GM12878 (cell line): ENCODE measurements at regions of chr5 and their contacts with region 1.

Region 1: DNA sequence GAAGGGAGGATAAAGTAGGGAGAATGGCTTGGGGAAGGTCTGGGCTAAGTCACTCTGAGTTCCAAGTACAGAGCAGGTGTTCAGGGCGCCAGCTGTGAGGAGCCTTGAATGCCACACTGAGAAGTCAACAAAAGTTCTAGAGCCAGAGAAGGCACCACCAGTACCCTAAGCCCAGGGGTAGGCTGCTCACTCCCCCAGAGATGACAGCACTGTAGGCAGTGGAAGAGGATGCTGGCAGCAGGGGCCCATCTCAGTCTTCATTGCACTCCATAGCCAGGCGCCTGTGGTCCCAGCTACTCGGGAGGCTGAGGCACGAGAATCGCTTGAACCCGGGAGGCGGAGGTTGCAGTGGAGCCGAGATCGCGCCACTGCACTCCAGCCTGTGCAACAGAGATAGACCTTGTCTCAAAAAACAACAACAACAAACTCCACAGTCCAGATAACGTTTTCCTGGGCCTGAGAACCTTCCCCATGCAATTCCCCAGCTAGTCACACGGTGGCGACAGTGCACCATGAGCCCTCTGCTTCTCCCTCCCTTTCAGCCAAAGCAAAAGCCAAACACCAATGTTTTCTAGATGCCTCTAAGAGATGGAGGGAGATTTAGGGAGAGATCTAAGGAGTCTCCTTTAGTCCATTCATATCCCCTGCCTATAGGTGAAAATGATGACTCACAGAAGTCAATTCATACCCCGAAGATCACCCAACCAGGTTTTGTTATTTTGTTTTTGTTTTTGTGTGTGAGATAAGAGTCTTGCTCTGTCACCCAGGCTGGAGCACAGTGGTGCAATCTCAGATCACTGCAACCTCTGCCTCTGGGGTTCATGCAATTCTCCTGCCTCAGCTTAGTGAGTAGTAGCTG is 19.8 kb upstream of the NSD1 start:
- DNase-seq: peak; percentile 55
- ATAC-seq: peak; percentile 81
- H3K4me3 ChIP-seq: no peak overlapping the region
- H3K27ac ChIP-seq: no peak overlapping the region
- H3K4me1 ChIP-seq: peaks cover 3% of the 10 kb centered on the region; the same call in 1 of the 2 replicates
- H3K27me3 ChIP-seq: no peaks in the 10 kb centered on the region
- CTCF ChIP-seq: peak; percentile 99 to 100 (median 99); a peak in 5 of 6 replicates
- EP300 ChIP-seq: no peak
- POLR2A ChIP-seq: no peak
- RAD21 ChIP-seq: peak; percentile 100

Region 2: DNA sequence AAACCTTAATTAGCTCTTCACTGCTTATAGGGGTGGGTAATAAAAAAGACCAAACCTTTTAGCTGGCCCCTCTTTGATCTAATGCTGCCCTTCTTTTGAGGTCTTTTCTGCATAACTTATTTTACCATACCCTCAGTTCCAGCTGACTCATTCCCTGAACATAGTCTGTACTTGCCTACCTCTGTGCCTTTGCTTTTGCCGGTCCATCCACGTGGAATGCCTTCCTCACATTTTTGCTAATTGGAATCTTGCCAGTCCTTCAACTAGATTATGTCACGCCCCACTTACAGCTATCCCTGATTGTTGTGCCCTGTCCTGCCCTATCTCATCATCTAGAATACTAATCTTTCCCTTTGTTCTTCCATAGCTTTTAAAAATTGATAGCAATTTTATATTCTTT is 621.4 kb before region 1 on chr5:
- CTCF ChIA-PET with region 1: no interaction called
- POLR2A ChIA-PET with region 1: no interaction called
- RAD21 ChIA-PET with region 1: no interaction called
- SMC1A ChIA-PET with region 1: no interaction called
- in situ Hi-C with region 1: no loop called
- intact Hi-C with region 1: no loop called
- DNase-seq: no peak
- ATAC-seq: no peak
- H3K4me3 ChIP-seq: no peak overlapping the region
- H3K27ac ChIP-seq: no peak overlapping the region
- H3K4me1 ChIP-seq: no peaks in the 10 kb centered on the region
- H3K27me3 ChIP-seq: no peaks in the 10 kb centered on the region
- CTCF ChIP-seq: no peak
- EP300 ChIP-seq: no peak
- POLR2A ChIP-seq: no peak
- RAD21 ChIP-seq: no peak

Region 3: DNA sequence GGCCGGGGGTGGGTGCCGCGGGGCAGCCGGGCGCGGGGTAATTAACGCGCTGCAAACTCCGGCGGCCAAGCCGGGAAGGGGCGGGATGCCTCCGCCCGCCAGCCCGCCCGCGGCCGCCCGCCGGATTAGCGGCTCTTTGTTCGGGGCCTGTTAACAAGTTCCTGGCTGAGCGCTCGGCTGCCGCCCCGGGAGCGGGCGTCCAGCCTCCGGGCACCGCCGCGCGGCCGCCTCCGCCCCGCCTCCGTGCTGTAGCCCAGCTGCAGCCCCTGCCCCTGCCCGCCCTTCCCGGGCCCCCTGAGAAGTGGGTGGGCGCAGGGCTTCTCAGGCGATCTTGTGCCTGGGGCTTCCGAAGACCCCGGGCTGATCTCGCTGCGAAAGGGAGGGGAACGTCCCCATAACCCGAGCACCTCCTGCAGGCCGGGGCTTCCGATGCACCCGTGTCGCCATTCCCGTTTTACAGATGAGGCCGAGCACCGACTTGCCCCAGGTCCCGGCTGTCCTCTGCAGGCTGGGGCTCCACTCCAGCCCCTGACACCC is 295.9 kb before region 1 on chr5:
- CTCF ChIA-PET with region 1: no interaction called
- POLR2A ChIA-PET with region 1: no interaction called
- RAD21 ChIA-PET with region 1: no interaction called
- SMC1A ChIA-PET with region 1: no interaction called
- in situ Hi-C with region 1: no loop called
- intact Hi-C with region 1: loop called (anchors 5 kb)
- DNase-seq: no peak
- ATAC-seq: peak; percentile 36
- H3K4me3 ChIP-seq: no peak overlapping the region
- H3K27ac ChIP-seq: no peak overlapping the region
- H3K4me1 ChIP-seq: no peaks in the 10 kb centered on the region
- H3K27me3 ChIP-seq: peaks cover 0 to 12% of the 10 kb centered on the region in 2 experiments; a peak in 3 of 4 replicates
- CTCF ChIP-seq: peak; percentile 16 to 29 (median 18); a peak in 2 of 6 replicates
- EP300 ChIP-seq: no peak
- POLR2A ChIP-seq: no peak
- RAD21 ChIP-seq: 0 out of 2 replicates have a peak, but pooled peaks have one; percentile 2

Region 4: DNA sequence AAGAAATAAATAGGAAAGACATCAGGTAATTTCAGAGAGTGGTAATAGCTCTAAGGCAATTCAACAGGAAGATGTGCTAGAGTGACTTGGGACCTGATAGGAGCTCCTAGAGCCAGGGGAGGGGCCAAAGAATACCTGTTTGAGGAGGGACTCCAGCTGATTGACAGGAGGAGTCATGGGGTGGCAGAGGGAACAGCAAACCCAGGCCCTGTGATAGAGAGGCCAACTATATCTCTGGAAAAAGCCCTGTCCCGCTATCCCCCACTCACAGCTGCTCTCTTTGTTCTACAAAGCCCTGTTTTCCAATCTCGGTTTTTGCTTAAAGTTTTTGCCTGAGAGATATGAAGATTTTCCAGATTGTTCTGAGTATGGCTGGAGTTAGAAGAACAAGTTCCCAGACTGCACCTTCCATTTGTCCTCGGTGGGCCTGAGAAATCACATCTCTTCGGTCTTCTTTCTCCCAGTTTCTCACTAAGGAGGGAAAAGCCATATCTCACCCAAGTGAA is 10.7 kb after region 1 on chr5:
- CTCF ChIA-PET with region 1: interaction called, 16 read pairs
- POLR2A ChIA-PET with region 1: no interaction called
- RAD21 ChIA-PET with region 1: interaction called, 4 read pairs
- SMC1A ChIA-PET with region 1: interaction called, 7 read pairs
- in situ Hi-C with region 1: no loop called
- intact Hi-C with region 1: no loop called
- DNase-seq: no peak
- ATAC-seq: peak; percentile 54
- H3K4me3 ChIP-seq: no peak overlapping the region
- H3K27ac ChIP-seq: no peak overlapping the region; the same call in 1 of the 2 replicates
- H3K4me1 ChIP-seq: peaks cover 15% of the 10 kb centered on the region
- H3K27me3 ChIP-seq: no peaks in the 10 kb centered on the region
- CTCF ChIP-seq: no peak
- EP300 ChIP-seq: no peak
- POLR2A ChIP-seq: no peak
- RAD21 ChIP-seq: no peak

Region 5: GRCh38 chr5:177249761-177250526 is 136.1 kb after region 1 on chr5:
- CTCF ChIA-PET with region 1: interaction called, 15 read pairs
- POLR2A ChIA-PET with region 1: no interaction called
- RAD21 ChIA-PET with region 1: interaction called, 9 read pairs
- SMC1A ChIA-PET with region 1: interaction called, 9 read pairs
- in situ Hi-C with region 1: no loop called
- intact Hi-C with region 1: no loop called
- DNase-seq: no peak
- ATAC-seq: no peak
- H3K4me3 ChIP-seq: no peak overlapping the region
- H3K27ac ChIP-seq: no peak overlapping the region
- H3K4me1 ChIP-seq: no peaks in the 10 kb centered on the region
- H3K27me3 ChIP-seq: no peaks in the 10 kb centered on the region
- CTCF ChIP-seq: no peak
- EP300 ChIP-seq: no peak
- POLR2A ChIP-seq: no peak
- RAD21 ChIP-seq: no peak

Region 6: DNA sequence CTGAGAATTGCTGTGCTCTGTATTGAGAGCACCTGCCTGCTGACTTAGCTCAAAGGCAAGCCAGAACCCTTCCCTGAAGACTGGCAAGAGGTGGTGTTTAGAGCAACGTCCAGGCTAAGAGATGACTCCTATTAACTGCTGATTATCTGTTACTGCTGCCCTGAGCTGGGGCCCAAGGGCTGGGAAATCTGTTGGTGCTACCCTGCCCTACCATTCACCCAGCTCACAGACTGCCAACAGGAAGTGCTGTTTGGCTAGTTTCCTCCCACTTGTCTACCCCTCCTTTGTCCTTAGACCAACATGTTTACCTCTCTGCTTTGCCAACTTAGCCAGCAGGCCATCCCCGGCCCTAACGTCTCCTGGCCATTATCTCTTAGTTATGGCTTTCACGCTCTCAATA is 182.8 kb after region 1 on chr5:
- CTCF ChIA-PET with region 1: interaction called, 35 read pairs
- POLR2A ChIA-PET with region 1: interaction called, 4 read pairs
- RAD21 ChIA-PET with region 1: interaction called, 12 read pairs
- SMC1A ChIA-PET with region 1: interaction called, 7 read pairs
- in situ Hi-C with region 1: loop called (anchors 5 kb)
- intact Hi-C with region 1: loop called (anchors 5 kb)
- DNase-seq: no peak
- ATAC-seq: no peak
- H3K4me3 ChIP-seq: no peak overlapping the region
- H3K27ac ChIP-seq: no peak overlapping the region; the same call in 1 of the 2 replicates
- H3K4me1 ChIP-seq: peaks cover 34% of the 10 kb centered on the region
- H3K27me3 ChIP-seq: no peaks in the 10 kb centered on the region
- CTCF ChIP-seq: no peak
- EP300 ChIP-seq: no peak
- POLR2A ChIP-seq: no peak
- RAD21 ChIP-seq: no peak

Region 7: GRCh38 chr5:177317959-177318377 is 204.2 kb after region 1 on chr5:
- CTCF ChIA-PET with region 1: interaction called, 8 read pairs
- POLR2A ChIA-PET with region 1: no interaction called
- RAD21 ChIA-PET with region 1: interaction called, 10 read pairs
- SMC1A ChIA-PET with region 1: interaction called, 3 read pairs
- in situ Hi-C with region 1: no loop called
- intact Hi-C with region 1: no loop called
- DNase-seq: no peak
- ATAC-seq: peak; percentile 80
- H3K4me3 ChIP-seq: no peak overlapping the region
- H3K27ac ChIP-seq: no peak overlapping the region
- H3K4me1 ChIP-seq: peaks cover 11% of the 10 kb centered on the region
- H3K27me3 ChIP-seq: no peaks in the 10 kb centered on the region
- CTCF ChIP-seq: peak; percentile 85 to 97 (median 93)
- EP300 ChIP-seq: no peak
- POLR2A ChIP-seq: no peak
- RAD21 ChIP-seq: peak; percentile 90

Region 8: DNA sequence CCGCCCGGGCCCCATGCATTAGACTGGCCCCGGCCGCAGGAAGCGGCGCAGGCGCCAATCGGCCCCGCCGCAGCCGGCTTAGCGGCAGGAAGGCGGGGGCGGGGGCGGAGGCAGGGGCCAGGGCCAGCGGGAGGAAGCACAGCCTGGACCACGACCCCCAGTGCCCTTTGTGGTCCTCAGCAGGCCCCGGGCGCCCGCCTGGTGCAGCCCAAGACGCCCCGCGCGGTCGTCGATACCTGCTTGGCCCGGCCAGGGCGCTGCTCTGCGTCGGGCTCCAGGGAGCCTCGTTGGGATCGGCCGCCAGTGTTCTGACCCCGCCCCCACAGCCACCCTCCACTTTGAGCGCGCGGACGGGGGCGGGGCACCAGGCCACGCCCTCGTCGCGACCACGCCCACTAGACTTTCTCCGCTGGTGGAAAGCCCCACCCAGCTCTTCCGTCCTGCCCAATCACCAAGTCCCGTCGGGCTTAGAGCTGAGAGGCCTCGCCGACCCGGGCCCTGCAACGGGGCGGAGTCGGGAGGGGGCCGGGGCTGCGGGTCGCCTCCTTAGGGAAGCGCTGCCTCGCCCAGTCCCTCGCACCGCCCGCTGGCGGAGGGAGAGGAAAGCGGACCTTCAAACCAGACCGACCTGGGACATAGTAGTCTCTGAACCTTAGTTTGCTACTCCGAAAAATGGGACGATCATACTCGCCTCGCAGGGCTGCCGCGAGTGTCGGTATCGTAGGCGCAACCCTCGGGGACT is 383.7 kb after region 1 on chr5 and contains the start of gene PDLIM7:
- CTCF ChIA-PET with region 1: interaction called, 3 read pairs
- POLR2A ChIA-PET with region 1: no interaction called
- RAD21 ChIA-PET with region 1: no interaction called
- SMC1A ChIA-PET with region 1: no interaction called
- in situ Hi-C with region 1: no loop called
- intact Hi-C with region 1: loop called (anchors 10 kb)
- DNase-seq: peak; percentile 77
- ATAC-seq: peak; percentile 81
- H3K4me3 ChIP-seq: peak within 1 kb of the TSS; percentile 86
- H3K27ac ChIP-seq: peak within 1 kb of the TSS; percentile 74
- H3K4me1 ChIP-seq: peaks cover 42% of the 10 kb centered on the region
- H3K27me3 ChIP-seq: no peaks in the 10 kb centered on the region; a peak in 1 of 4 replicates
- CTCF ChIP-seq: 0 out of 6 replicates have a peak, but pooled peaks of 1 of the 3 experiments have one; percentile 0
- EP300 ChIP-seq: no peak
- POLR2A ChIP-seq: peak; percentile 98
- RAD21 ChIP-seq: no peak
- polyA plus RNA-seq, gene PDLIM7: 0.82 to 2.3 TPM